Heart right ventricle (tissue), 16 donors: ENCODE measurements at regions of chr5 and their contacts with region 1.

Region 1: GRCh38 chr5:10457682-10458574 is 16.2 kb downstream of the ROPN1L start:
- DNase-seq: peak; percentile 34 to 46
- ATAC-seq: peak in 7 of 8 donors; percentile 39 to 59 (median 50)
- H3K4me3 ChIP-seq: no peak overlapping the region
- H3K27ac ChIP-seq: peak overlapping the region in 3 of 10 donors; percentile 0 to 38 (median 21)
- H3K4me1 ChIP-seq: peaks cover 8 to 40% (median 29%) of the 10 kb centered on the region in 9 donors
- H3K27me3 ChIP-seq: no peaks in the 10 kb centered on the region
- CTCF ChIP-seq: peak in 5 of 9 donors; percentile 10 to 42 (median 29)

Region 2: GRCh38 chr5:10220243-10220642 is 237.7 kb before region 1 on chr5:
- intact Hi-C with region 1: no loop called
- DNase-seq: no peak
- ATAC-seq: no peak
- H3K4me3 ChIP-seq: no peak overlapping the region
- H3K27ac ChIP-seq: no peak overlapping the region
- H3K4me1 ChIP-seq: no peaks in the 10 kb centered on the region
- H3K27me3 ChIP-seq: no peaks in the 10 kb centered on the region
- CTCF ChIP-seq: peak in 2 of 9 donors; percentile 12 to 24

Region 3: DNA sequence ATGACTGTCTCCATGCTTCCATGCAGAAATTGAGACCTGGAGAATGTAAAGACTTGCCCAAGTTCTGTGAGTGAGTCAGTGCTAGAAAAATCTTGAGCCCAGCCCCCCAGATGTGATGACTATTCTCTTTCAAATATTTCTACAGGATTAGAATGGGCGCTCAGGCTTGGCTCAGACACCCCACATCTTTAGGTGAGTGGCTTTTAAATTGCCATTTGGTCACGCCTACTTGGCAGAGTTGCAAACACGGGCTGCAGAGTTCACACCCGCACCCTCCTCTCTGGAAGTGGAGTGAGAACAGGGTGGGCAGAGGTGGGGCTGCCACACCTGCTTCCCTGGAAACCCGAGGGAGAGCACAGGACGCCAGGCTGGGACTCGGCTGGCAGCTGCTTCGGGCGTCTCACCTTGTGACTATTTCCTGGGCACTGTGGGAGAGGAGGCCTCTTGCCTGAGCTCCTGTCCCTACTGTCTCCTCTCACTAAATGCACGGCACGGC is 21.3 kb after region 1 on chr5:
- intact Hi-C with region 1: no loop called
- DNase-seq: no peak
- ATAC-seq: no peak
- H3K4me3 ChIP-seq: no peak overlapping the region
- H3K27ac ChIP-seq: peak overlapping the region in 1 of 10 donors; percentile 51
- H3K4me1 ChIP-seq: peaks cover 0 to 23% (median 3%) of the 10 kb centered on the region in 9 donors
- H3K27me3 ChIP-seq: no peaks in the 10 kb centered on the region
- CTCF ChIP-seq: no peak

Region 4: DNA sequence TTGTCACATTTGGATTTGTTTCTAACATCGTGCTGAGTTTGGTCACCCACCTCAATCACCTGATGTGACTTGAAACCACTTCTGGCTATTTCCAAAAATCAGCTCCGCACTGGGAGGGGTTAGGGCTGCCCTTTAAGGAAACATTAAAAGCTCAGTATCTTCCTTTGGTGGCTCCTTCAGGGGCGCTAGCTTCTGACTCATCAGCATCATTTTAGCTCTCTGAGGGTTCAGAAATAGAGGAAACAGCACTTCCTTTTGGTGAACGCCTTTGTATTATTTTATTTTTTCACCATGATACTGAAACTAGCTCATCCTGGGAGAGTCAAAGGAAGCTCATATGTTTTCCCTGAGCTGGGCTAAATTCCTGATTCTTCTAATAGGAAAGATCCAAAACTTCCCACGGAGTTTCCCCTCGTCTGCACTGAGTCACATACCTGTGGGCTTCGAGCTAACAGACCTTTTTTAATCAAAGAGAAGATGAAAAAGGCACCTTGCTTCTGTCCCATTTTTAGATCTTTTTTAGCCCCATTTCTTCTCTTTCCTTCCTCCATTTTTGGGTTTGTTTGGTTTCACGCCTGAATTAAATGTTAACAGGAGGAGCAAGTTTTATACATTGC is 32.0 kb after region 1 on chr5:
- intact Hi-C with region 1: no loop called
- DNase-seq: no peak
- ATAC-seq: peak in 4 of 8 donors; percentile 19 to 68 (median 46)
- H3K4me3 ChIP-seq: no peak overlapping the region
- H3K27ac ChIP-seq: peak overlapping the region in 1 of 10 donors; percentile 16
- H3K4me1 ChIP-seq: peaks cover 0 to 38% (median 24%) of the 10 kb centered on the region in 9 donors
- H3K27me3 ChIP-seq: no peaks in the 10 kb centered on the region
- CTCF ChIP-seq: no peak

Region 5: GRCh38 chr5:10552183-10553143 is 94.5 kb after region 1 on chr5:
- intact Hi-C with region 1: loop called in 1 of 10 experiments (anchors 5 kb)
- DNase-seq: no peak
- ATAC-seq: peak in 2 of 8 donors; percentile 13 to 40
- H3K4me3 ChIP-seq: no peak overlapping the region
- H3K27ac ChIP-seq: peak overlapping the region in 1 of 10 donors; percentile 28
- H3K4me1 ChIP-seq: peaks cover 0 to 37% (median 8%) of the 10 kb centered on the region in 9 donors
- H3K27me3 ChIP-seq: no peaks in the 10 kb centered on the region
- CTCF ChIP-seq: no peak

Region 6: DNA sequence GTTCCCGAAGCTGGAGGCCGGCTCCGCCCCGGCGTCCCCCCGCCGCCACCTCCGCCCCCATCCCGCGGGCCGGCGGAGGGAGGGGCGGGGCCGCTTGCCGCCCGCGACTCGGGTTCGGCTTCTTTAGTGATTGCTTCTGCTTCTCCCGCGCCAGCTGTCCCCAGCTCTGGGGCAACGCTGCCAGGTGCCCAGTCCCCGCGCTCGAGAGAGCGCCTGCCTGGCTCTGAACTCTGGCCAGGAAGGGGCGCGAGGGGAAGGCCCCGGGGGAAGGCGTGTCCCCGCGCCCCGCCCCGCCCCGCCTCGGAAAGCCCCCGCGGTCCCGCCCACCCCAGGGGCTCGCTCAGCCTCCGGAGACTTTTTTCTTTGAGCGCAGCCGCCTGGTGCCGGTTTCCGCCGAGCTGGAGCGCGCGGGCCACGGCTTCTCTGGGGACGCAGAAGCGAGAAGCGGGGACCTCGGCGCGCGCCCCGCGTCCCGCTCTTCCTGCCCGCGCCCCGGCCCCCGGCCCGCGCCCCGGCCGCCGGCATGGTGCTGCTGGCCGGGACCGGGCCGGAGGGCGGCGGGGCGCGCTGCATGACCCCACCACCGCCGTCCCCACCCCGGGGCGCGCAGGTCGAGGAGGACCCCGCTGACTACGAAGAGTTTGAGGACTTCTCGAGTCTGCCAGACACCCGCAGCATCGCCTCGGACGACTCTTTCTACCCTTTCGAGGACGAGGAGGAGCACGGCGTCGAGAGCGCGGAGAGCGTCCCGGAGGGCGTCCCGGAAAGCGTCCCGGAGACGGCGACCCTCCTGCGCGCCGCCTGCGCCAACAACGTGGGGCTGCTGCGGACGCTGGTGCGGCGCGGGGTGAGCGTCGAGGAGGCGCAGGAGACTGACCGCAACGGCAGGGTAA is 106.3 kb after region 1 on chr5 and contains the start of gene ANKRD33B:
- intact Hi-C with region 1: loop called in 2 of 10 experiments (anchors 5 to 10 kb)
- DNase-seq: peak; percentile 72 to 73
- ATAC-seq: peak; percentile 67 to 78 (median 74)
- H3K4me3 ChIP-seq: peak within 1 kb of the TSS; percentile 50 to 87 (median 78)
- H3K27ac ChIP-seq: peak within 1 kb of the TSS; percentile 33 to 89 (median 84)
- H3K4me1 ChIP-seq: peaks cover 6 to 52% (median 41%) of the 10 kb centered on the region in 9 donors
- H3K27me3 ChIP-seq: peaks cover 0 to 35% (median 0%) of the 10 kb centered on the region in 7 donors
- CTCF ChIP-seq: no peak
- total RNA-seq, gene ANKRD33B: 1.9 to 33.0 (median 19.8) TPM

Region 7: GRCh38 chr5:10577371-10578292 is 119.7 kb after region 1 on chr5:
- intact Hi-C with region 1: loop called in 1 of 10 experiments (anchors 5 kb)
- DNase-seq: peak; percentile 30 to 86
- ATAC-seq: peak; percentile 89 to 96 (median 94)
- H3K4me3 ChIP-seq: no peak overlapping the region
- H3K27ac ChIP-seq: peak overlapping the region in 9 of 10 donors; percentile 50 to 89 (median 75)
- H3K4me1 ChIP-seq: peaks cover 5 to 64% (median 40%) of the 10 kb centered on the region in 9 donors
- H3K27me3 ChIP-seq: no peaks in the 10 kb centered on the region
- CTCF ChIP-seq: no peak

Region 8: DNA sequence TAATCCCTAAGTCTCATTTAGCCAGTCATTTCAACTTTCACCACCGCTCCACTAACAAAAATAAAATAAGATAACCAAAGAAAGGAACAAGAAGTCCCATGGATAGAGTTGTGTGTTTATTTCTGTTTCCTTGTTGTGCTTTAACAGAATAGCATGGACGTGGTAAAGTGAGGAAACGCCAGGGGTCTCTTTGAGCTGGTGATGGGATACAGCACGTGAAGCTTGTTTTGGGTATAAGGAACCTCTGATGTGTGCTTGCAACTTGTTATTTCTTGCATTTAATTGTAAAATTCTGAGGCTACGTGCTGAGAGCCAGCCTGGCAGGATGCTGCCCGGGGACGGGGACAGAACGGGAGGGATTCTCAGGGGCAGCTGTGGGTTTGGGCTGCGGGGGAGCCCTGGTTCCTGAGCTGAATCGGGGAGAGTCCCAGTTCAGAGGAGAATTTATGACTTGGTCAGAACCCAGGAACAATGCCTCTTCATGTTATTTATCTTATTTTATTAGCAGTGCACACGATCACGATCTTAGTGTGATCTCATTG is 169.3 kb after region 1 on chr5:
- intact Hi-C with region 1: loop called in 6 of 10 experiments (anchors 1 to 5 kb)
- DNase-seq: no peak
- ATAC-seq: peak in 5 of 8 donors; percentile 5 to 29 (median 17)
- H3K4me3 ChIP-seq: peak overlapping the region in 9 of 10 donors; percentile 6 to 37 (median 32)
- H3K27ac ChIP-seq: peak overlapping the region in 7 of 10 donors; percentile 3 to 69 (median 36)
- H3K4me1 ChIP-seq: peaks cover 9 to 48% (median 33%) of the 10 kb centered on the region in 9 donors
- H3K27me3 ChIP-seq: peaks cover 0 to 6% (median 0%) of the 10 kb centered on the region in 7 donors
- CTCF ChIP-seq: no peak

Region 9: GRCh38 chr5:10689391-10690081 is 231.6 kb after region 1 on chr5:
- intact Hi-C with region 1: loop called in 1 of 10 experiments (anchors 5 kb)
- DNase-seq: no peak
- ATAC-seq: peak in 6 of 8 donors; percentile 11 to 37 (median 25)
- H3K4me3 ChIP-seq: no peak overlapping the region
- H3K27ac ChIP-seq: no peak overlapping the region
- H3K4me1 ChIP-seq: peaks cover 0 to 8% (median 0%) of the 10 kb centered on the region in 9 donors
- H3K27me3 ChIP-seq: no peaks in the 10 kb centered on the region
- CTCF ChIP-seq: peak in 5 of 9 donors; percentile 22 to 41 (median 29)